SK-N-SH (cell line): ENCODE measurements at regions of chr16 and their contacts with region 1.

Region 1: GRCh38 chr16:50390914-50391716 is 22.3 kb upstream of the BRD7 start:
- DNase-seq: peak; percentile 72
- H3K4me3 ChIP-seq: no peak overlapping the region
- H3K27ac ChIP-seq: peak overlapping the region in 1 of 2 experiments; percentile 97; a peak in 2 of 4 replicates
- H3K4me1 ChIP-seq: peaks cover 0 to 56% of the 10 kb centered on the region in 2 experiments; a peak in 1 of 4 replicates
- H3K27me3 ChIP-seq: peaks cover 9% of the 10 kb centered on the region; the same call in 1 of the 2 replicates
- CTCF ChIP-seq: no peak
- EP300 ChIP-seq: 0 out of 4 replicates have a peak, but pooled peaks of 1 of the 2 experiments have one; percentile 27
- RAD21 ChIP-seq: peak; percentile 13; the same call in 1 of the 2 replicates

Region 2: GRCh38 chr16:50373780-50374179 is 17.3 kb before region 1 on chr16:
- CTCF ChIA-PET with region 1: interaction called, 13 read pairs
- POLR2A ChIA-PET with region 1: interaction called, 5 read pairs
- DNase-seq: no peak
- H3K4me3 ChIP-seq: no peak overlapping the region
- H3K27ac ChIP-seq: no peak overlapping the region
- H3K4me1 ChIP-seq: peaks cover 0 to 26% of the 10 kb centered on the region in 2 experiments; a peak in 1 of 4 replicates
- H3K27me3 ChIP-seq: no peaks in the 10 kb centered on the region
- CTCF ChIP-seq: no peak
- EP300 ChIP-seq: no peak
- RAD21 ChIP-seq: no peak

Region 3: GRCh38 chr16:50425648-50426047 is 34.5 kb after region 1 on chr16:
- CTCF ChIA-PET with region 1: interaction called, 8 read pairs
- POLR2A ChIA-PET with region 1: interaction called, 13 read pairs
- DNase-seq: peak; percentile 74
- H3K4me3 ChIP-seq: no peak overlapping the region
- H3K27ac ChIP-seq: peak overlapping the region in 1 of 2 experiments; percentile 93; a peak in 2 of 4 replicates
- H3K4me1 ChIP-seq: peaks cover 0 to 32% of the 10 kb centered on the region in 2 experiments; a peak in 2 of 4 replicates
- H3K27me3 ChIP-seq: no peaks in the 10 kb centered on the region
- CTCF ChIP-seq: no peak
- EP300 ChIP-seq: peak in 1 of 2 experiments; percentile 98; a peak in 2 of 4 replicates
- RAD21 ChIP-seq: peak; percentile 23; the same call in 1 of the 2 replicates